AG04449 (cell line): ENCODE measurements at regions of chr15 and their contacts with region 1.

Region 1: DNA sequence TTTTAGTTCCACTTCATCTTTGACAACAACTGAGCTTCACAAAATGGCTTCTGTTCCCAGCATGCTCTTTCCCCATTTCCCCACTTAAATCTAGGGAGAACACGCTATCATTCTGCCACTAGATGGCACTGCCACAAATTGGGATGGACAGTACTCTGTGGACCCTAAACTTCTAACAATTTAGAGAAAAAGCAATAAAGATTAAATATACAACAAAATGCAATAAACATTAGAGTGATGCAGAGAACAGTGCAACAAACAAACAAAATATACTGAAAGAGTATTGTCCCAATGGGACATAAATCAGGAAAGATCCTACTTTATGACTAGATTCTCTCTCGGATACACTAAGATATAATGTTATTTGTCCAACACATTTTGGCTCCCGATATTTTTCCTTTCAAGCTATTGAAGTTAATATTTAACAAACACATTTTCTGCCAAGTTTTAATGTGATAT is 169.7 kb upstream of the TMCO5A start:
- DNase-seq: no peak
- H3K4me3 ChIP-seq: no peak overlapping the region
- CTCF ChIP-seq: peak; percentile 52

Region 2: DNA sequence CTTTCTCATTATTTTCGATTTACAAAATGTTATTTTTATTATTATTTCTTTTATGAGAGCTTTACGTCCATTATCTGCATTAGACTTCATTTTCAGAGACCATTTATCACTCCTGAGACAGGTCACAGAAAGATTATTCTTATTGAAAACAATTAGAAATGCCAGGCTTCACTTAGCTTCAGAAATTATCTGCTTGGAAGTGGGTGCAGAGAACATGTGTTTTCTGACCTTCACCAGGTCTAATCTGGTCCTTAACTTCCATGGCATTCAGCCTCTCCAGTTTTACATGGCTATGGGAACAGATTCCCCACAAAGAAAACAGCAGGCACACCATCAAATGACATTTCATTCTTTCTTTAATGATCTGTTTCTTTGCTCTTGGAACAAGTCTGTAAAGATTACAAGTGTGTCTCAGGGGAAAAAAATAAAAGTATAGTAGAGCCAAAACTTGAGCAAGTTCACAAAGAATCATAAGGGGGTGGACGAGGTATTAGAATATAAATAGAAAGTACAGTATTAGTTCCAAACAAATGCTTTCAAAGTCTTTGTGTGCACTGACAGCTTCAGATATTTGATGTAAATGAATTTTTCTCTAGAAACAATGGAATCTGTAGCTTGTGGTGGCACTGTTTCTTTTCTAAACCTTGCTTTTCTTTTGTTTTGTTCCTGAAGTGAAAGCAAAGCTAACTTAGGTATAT is 370.2 kb before region 1 on chr15:
- CTCF ChIA-PET with region 1: no interaction called
- POLR2A ChIA-PET with region 1: no interaction called
- DNase-seq: no peak
- H3K4me3 ChIP-seq: no peak overlapping the region
- CTCF ChIP-seq: no peak

Region 3: DNA sequence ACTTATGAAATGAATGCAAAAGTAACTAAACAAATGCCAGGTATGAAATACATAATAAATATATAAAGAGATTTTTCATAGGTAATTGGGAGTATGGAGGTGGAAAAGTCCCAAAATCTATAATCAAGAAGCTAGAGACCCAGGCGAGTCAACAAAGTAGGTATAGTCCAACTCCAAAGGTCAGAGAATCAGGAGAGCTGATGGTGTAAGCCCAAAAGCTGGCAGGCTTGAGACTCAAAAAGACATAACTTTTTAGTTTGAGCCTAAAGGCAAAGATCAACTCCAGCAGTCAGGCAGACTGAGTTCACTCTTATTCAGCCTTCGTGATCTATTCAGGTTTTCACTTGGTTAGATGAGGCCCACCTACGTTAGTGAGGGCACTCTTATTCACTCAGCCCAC is 12.2 kb after region 1 on chr15:
- CTCF ChIA-PET with region 1: interaction called, 14 read pairs
- POLR2A ChIA-PET with region 1: no interaction called
- DNase-seq: no peak
- H3K4me3 ChIP-seq: no peak overlapping the region
- CTCF ChIP-seq: no peak

Region 4: GRCh38 chr15:37783290-37783689 is 18.5 kb after region 1 on chr15:
- CTCF ChIA-PET with region 1: interaction called, 14 read pairs
- POLR2A ChIA-PET with region 1: no interaction called
- DNase-seq: no peak
- H3K4me3 ChIP-seq: no peak overlapping the region
- CTCF ChIP-seq: no peak

Region 5: GRCh38 chr15:37793851-37794250 is 29.1 kb after region 1 on chr15:
- CTCF ChIA-PET with region 1: interaction called, 10 read pairs
- POLR2A ChIA-PET with region 1: no interaction called
- DNase-seq: no peak
- H3K4me3 ChIP-seq: no peak overlapping the region
- CTCF ChIP-seq: peak; percentile 40